ENCODE measurements at regions of chr2 and their contacts with region 1.

Region 1: DNA sequence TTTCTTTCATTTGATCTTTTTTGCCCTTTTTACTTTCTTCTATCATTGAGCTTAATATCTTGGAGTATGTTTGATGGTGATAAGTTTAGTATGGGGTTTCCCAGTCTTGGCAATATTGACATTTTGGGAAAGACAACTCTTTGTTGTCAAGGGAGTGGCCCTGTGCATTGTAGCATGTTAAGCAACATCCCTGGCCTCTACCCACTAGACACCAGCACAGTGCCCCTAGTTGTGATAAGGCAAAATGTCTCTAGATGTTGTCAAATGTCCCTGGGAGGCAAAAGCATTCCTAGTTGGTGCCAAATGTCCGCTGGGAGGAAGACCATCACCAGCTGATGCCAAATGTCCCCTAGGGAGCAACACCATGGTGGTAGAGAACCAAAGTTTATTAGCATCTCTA is 28.2 kb downstream of the GULP1 start:
- DNase-seq: no peak
- H3K4me3 ChIP-seq: no peak overlapping the region
- H3K27ac ChIP-seq: no peak overlapping the region
- H3K4me1 ChIP-seq: peaks cover 0 to 11% (median 8%) of the 10 kb centered on the region in 4 experiments; a peak in 5 of 7 replicates
- H3K27me3 ChIP-seq: no peaks in the 10 kb centered on the region
- CTCF ChIP-seq: peak in 2 of 3 experiments; percentile 5 to 60; a peak in 2 of 4 replicates
- EP300 ChIP-seq: no peak
- POLR2A ChIP-seq: no peak
- RAD21 ChIP-seq: peak; percentile 18 to 45; a peak in 2 of 4 replicates

Region 2: GRCh38 chr2:188303363-188304031 is 16.3 kb before region 1 on chr2:
- CTCF ChIA-PET with region 1: interaction called, 22 read pairs
- POLR2A ChIA-PET with region 1: interaction called, 12 read pairs
- DNase-seq: peak in 1 of 2 experiments; percentile 70
- H3K4me3 ChIP-seq: peak overlapping the region in 2 of 4 experiments; percentile 9 to 42; a peak in 2 of 8 replicates
- H3K27ac ChIP-seq: peak overlapping the region; percentile 75
- H3K4me1 ChIP-seq: peaks cover 11 to 42% (median 34%) of the 10 kb centered on the region in 4 experiments
- H3K27me3 ChIP-seq: no peaks in the 10 kb centered on the region
- CTCF ChIP-seq: no peak
- EP300 ChIP-seq: peak in 1 of 2 experiments; percentile 89; a peak in 1 of 3 replicates
- POLR2A ChIP-seq: peak in 1 of 2 experiments; percentile 29; a peak in 2 of 3 replicates
- RAD21 ChIP-seq: peak in 1 of 2 experiments; percentile 9; a peak in 1 of 4 replicates

Region 3: DNA sequence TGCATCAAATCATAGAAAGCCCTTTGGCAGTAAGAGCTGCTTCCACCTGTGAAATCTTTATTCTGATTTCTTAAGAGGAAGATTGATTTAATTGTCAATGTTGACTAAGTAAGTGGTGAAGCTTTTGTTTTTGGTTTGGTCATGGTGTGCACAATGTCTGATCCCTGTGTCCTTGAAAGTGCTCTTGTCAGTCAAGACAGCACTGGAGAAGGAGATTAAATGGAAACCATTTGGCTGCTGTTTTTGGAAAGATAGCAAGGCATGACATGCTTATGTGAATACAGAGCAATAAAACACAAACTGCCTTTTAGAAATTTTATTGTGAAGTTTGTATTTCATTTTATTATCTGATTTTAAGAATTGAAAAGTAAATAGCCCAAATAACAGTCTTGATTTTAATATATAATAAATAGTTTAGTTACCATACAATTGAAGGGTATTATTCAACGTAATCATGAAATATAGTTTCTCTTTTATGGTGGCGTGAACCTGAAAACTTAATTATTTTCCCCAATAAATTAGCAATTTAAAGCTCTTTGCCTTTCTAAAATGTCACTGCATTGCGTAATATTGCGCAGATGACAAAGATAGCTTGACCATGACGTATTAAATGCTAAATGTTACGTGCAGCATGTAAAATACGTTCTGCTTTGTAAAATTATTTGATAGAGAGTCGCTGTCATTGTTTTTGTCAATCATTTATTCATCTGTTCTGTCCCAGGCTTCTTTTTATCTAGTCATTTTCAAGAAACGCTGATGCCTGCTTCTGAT is 40.8 kb after region 1 on chr2:
- CTCF ChIA-PET with region 1: no interaction called
- POLR2A ChIA-PET with region 1: no interaction called
- DNase-seq: no peak
- H3K4me3 ChIP-seq: no peak overlapping the region
- H3K27ac ChIP-seq: no peak overlapping the region
- H3K4me1 ChIP-seq: peaks cover 0 to 8% (median 4%) of the 10 kb centered on the region in 4 experiments; a peak in 3 of 7 replicates
- H3K27me3 ChIP-seq: no peaks in the 10 kb centered on the region
- CTCF ChIP-seq: no peak
- EP300 ChIP-seq: no peak
- POLR2A ChIP-seq: no peak
- RAD21 ChIP-seq: no peak